ENCODE measurements at regions of chr5 and their contacts with region 1.

Region 1: GRCh38 chr5:107257885-107258520 is 412.7 kb downstream of the EFNA5 start:
- DNase-seq: no peak
- ATAC-seq: no peak

Region 2: GRCh38 chr5:106443746-106444145 is 814.3 kb before region 1 on chr5:
- intact Hi-C with region 1: loop called (anchors 10 kb)
- DNase-seq: no peak
- ATAC-seq: no peak

Measured in left ventricle myocardium superior (tissue), 1 donor.